ENCODE measurements at regions of chr2 and their contacts with region 1.

Region 1: DNA sequence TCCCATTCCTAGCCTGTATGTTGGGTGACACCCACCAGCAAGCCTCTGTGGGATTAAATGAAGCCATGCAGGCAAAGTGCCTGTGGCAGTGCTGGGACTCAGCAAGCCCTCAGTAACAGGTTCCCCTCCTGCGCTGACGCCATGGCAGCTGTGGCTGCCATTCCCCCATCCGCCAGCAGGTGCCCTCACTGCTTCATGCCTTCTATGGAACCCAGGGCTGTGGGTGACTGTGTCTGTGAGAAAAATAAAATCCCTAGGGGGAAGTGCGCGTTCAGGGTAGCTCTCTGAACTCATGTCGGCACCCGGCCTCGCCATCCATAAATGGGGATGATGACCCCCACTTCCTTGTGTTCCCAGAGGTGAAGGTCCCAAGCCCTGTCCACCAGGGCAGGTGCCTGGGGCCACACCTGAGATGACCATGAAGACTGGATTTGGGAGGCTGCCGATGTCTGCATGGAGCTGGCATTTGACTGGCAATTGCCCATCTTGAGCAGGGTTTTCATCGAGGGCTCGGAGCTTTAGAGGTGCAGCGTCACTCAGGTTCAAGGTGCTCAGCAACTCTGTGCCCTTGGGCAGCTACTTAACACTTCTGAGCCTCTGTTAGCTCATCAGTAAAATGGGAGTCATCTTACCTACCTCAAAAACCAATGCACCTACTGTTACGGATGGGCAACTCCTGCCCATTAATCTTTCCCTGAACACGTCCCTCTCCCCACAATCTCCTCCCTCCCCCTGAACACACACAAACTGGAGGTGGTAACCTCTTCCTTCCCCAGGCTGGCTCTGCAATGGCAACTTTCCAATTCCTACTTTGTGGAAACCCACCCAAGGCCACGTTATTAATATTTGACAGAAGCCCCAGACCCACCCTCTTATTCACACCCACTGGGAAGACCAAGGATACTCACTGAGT is 2.9 kb upstream of the MAL start:
- DNase-seq: peak; percentile 65 to 90 (median 81)
- ATAC-seq: peak; percentile 36 to 65 (median 52)
- H3K4me3 ChIP-seq: no peak overlapping the region
- H3K4me3 Mint-ChIP-seq: peak overlapping the region; percentile 59 to 100 (median 79)
- H3K27ac ChIP-seq: no peak overlapping the region
- H3K27ac Mint-ChIP-seq: peak overlapping the region; percentile 90 to 91
- H3K4me1 ChIP-seq: peaks cover 24 to 50% of the 10 kb centered on the region in 2 experiments
- H3K4me1 Mint-ChIP-seq: peaks cover 48 to 59% (median 56%) of the 10 kb centered on the region in 3 donors
- H3K27me3 ChIP-seq: peaks cover 0 to 27% of the 10 kb centered on the region in 2 experiments
- H3K27me3 Mint-ChIP-seq: peaks cover 0 to 11% of the 10 kb centered on the region in 2 donors

Region 2: GRCh38 chr2:95053543-95053942 is 31.0 kb after region 1 on chr2:
- CTCF ChIA-PET with region 1: interaction called, 11 to 12 read pairs
- POLR2A ChIA-PET with region 1: no interaction called
- DNase-seq: peak in 2 of 35 experiments; percentile 30 to 45
- ATAC-seq: peak in 3 of 4 experiments; percentile 10 to 41 (median 35)
- H3K4me3 ChIP-seq: no peak overlapping the region
- H3K4me3 Mint-ChIP-seq: peak overlapping the region in 1 of 3 donors; percentile 54
- H3K27ac ChIP-seq: no peak overlapping the region
- H3K27ac Mint-ChIP-seq: peak overlapping the region; percentile 95 to 96
- H3K4me1 ChIP-seq: peaks cover 4 to 66% of the 10 kb centered on the region in 2 experiments
- H3K4me1 Mint-ChIP-seq: peaks cover 64 to 84% (median 71%) of the 10 kb centered on the region in 3 donors
- H3K27me3 ChIP-seq: peaks cover 0 to 9% of the 10 kb centered on the region in 2 experiments
- H3K27me3 Mint-ChIP-seq: no peaks in the 10 kb centered on the region

Region 3: GRCh38 chr2:95076784-95077529 is 54.4 kb after region 1 on chr2:
- CTCF ChIA-PET with region 1: interaction called, 68 to 154 read pairs
- POLR2A ChIA-PET with region 1: interaction called in 1 of 2 experiments, 6 read pairs
- DNase-seq: peak; percentile 78 to 95 (median 89)
- ATAC-seq: peak; percentile 65 to 79 (median 72)
- H3K4me3 ChIP-seq: peak overlapping the region; percentile 10 to 56
- H3K4me3 Mint-ChIP-seq: peak overlapping the region; percentile 70 to 88 (median 81)
- H3K27ac ChIP-seq: peak overlapping the region; percentile 79
- H3K27ac Mint-ChIP-seq: peak overlapping the region; percentile 98 to 99
- H3K4me1 ChIP-seq: peaks cover 41 to 69% of the 10 kb centered on the region in 2 experiments
- H3K4me1 Mint-ChIP-seq: peaks cover 74 to 76% (median 76%) of the 10 kb centered on the region in 3 donors
- H3K27me3 ChIP-seq: peaks cover 0 to 24% of the 10 kb centered on the region in 2 experiments
- H3K27me3 Mint-ChIP-seq: no peaks in the 10 kb centered on the region

Region 4: GRCh38 chr2:95115418-95115817 is 92.9 kb after region 1 on chr2:
- CTCF ChIA-PET with region 1: interaction called, 32 to 44 read pairs
- POLR2A ChIA-PET with region 1: interaction called in 1 of 2 experiments, 4 read pairs
- DNase-seq: peak; percentile 45 to 84 (median 68)
- ATAC-seq: peak; percentile 96 to 99 (median 98)
- H3K4me3 ChIP-seq: no peak overlapping the region
- H3K4me3 Mint-ChIP-seq: no peak overlapping the region
- H3K27ac ChIP-seq: no peak overlapping the region
- H3K27ac Mint-ChIP-seq: no peak overlapping the region
- H3K4me1 ChIP-seq: peaks cover 11 to 12% of the 10 kb centered on the region in 2 experiments
- H3K4me1 Mint-ChIP-seq: peaks cover 43 to 49% (median 46%) of the 10 kb centered on the region in 3 donors
- H3K27me3 ChIP-seq: no peaks in the 10 kb centered on the region
- H3K27me3 Mint-ChIP-seq: no peaks in the 10 kb centered on the region

Region 5: DNA sequence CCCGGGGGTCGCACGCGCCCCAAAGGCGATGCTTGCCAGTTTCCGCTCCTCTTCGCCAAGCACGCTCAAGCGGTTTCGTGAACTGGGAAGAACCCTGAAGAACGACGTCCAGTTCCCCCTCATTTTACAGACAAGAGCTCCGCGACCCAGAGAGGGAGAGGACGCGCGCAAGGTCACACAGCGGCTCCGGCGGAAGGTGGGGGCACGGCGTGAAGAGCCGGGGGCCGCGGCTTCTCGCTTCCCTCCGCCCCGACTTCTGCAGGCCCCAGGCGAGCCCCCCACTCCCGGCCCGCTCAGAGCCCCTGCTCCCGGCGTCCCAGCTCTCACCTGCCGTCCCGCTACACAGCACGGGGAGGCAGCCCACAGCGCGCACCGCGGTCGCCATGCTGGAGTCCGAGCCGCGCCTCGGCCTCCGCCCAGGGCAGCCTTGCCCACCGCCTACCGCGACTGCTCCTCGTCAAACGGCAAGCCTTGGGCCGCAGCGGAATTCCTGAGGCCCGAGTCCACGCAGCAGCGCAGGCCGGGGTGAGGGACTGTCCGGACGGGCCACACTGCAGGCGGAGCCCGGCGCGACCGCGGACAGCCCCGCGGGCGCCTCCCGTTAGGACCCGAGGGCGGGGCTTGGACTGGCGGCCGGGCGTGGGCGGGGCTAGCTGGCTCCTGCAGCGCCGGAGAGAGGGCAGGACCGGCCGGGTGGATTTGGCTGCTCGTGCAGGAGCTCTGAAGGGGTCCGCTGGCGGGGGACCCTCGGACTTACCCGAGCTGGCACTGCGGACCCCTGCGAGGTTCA is 99.0 kb after region 1 on chr2 and contains the start of gene MRPS5:
- CTCF ChIA-PET with region 1: interaction called, 11 to 44 read pairs
- POLR2A ChIA-PET with region 1: no interaction called
- DNase-seq: peak; percentile 49 to 89 (median 75)
- ATAC-seq: peak; percentile 95 to 98 (median 96)
- H3K4me3 ChIP-seq: peak within 1 kb of the TSS; percentile 78 to 83
- H3K4me3 Mint-ChIP-seq: peak within 1 kb of the TSS; percentile 94 to 98 (median 96)
- H3K27ac ChIP-seq: peak within 1 kb of the TSS; percentile 11
- H3K27ac Mint-ChIP-seq: peak within 1 kb of the TSS; percentile 93 to 95
- H3K4me1 ChIP-seq: peaks cover 9 to 19% of the 10 kb centered on the region in 2 experiments
- H3K4me1 Mint-ChIP-seq: peaks cover 48 to 56% (median 48%) of the 10 kb centered on the region in 3 donors
- H3K27me3 ChIP-seq: no peaks in the 10 kb centered on the region
- H3K27me3 Mint-ChIP-seq: no peaks in the 10 kb centered on the region
- total RNA-seq, gene MRPS5: 32.3 to 58.3 (median 57.0) TPM